ENCODE measurements at regions of chrX and their contacts with region 1.

Region 1: DNA sequence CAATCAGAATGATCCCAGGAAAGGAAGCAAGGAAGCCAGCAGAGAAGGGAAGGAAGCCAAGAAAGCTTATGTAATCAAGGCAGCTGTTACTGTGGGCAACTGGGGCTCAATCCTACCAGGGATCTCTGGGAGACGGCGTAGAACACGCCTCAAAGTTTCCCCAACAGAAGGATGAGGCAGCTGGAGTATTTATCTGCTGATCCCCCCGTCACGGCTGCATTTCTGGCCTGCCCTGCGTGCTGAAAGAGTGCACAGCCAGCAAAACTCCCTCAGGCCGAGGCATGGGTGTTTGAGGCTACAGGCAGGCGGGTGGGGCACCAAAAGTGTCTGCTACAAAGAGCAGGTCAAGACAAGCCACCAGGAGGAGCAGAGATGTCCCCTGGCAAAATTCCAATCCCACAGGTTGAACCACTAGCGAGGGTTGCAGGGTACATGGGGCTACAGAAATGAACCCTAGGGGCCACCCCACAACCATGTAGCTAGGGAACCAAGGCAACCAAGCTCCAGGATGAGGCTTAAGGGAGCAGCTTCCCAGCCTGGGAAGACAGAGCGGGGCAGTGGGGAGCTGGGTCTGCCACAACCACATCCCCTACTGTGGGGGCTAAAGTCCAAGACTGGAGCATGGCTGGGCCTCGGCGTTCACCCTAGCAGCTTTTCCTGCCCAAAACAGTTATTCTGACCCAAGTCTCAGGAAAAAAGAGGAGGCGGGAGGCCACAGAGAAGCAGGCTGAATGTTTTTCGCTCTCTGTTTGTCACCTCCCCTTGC is 113.4 kb downstream of the BCOR start:
- DNase-seq: no peak

Region 2: GRCh38 chrX:39996536-39996935 is 12.2 kb after region 1 on chrX:
- CTCF ChIA-PET with region 1: interaction called, 10 read pairs
- POLR2A ChIA-PET with region 1: no interaction called
- DNase-seq: no peak